Activated CD4-positive, alpha-beta T cell treated with anti-CD3 and anti-CD28 coated beads for 36 hours (primary cell): ENCODE measurements at regions of chr20 and their contacts with region 1.

Region 1: GRCh38 chr20:36384022-36384619 is 78.0 kb downstream of the DLGAP4 start:
- DNase-seq: peak; percentile 73
- ATAC-seq: peak; percentile 78
- H3K4me3 Mint-ChIP-seq: no peak overlapping the region
- H3K27ac Mint-ChIP-seq: no peak overlapping the region
- H3K4me1 Mint-ChIP-seq: no peaks in the 10 kb centered on the region
- H3K27me3 Mint-ChIP-seq: peaks cover 13% of the 10 kb centered on the region

Region 2: DNA sequence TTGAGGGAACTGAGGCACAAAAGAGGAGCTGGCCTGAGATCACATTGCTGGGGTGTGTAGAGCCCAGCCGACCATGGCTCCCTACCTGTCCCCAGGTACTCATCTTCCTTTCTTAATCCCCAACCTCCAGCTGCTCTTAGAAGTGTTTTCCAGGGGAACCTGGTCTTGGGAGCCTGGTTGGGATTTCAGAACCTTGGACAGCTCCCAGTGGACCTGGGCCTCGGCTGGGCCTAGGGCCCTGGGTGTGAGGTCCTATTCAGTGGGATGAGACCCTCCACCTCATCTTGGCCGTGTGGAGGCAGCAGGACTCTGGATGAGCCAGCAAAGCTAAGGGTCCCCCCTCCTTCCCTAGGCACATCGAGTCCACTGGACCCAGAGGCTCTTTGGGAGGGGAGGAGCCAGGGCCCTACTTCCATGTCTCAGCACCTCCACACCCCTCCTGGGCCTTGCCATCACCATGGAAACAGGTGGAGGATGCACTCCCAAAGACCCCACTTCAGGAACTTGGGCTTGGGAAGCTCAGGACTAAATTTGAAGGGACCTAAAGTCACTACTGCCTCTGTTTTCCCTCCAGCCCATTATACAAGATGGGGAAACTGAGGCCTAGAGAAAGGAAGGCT is 39.5 kb before region 1 on chr20:
- CTCF ChIA-PET with region 1: no interaction called
- POLR2A ChIA-PET with region 1: no interaction called
- intact Hi-C with region 1: loop called in 1 of 2 experiments (anchors 1 kb)
- DNase-seq: peak; percentile 56
- ATAC-seq: no peak
- H3K4me3 Mint-ChIP-seq: no peak overlapping the region
- H3K27ac Mint-ChIP-seq: no peak overlapping the region
- H3K4me1 Mint-ChIP-seq: peaks cover 4% of the 10 kb centered on the region
- H3K27me3 Mint-ChIP-seq: peaks cover 3% of the 10 kb centered on the region